ENCODE measurements at regions of chr7 and their contacts with region 1.

Region 1: GRCh38 chr7:13524076-13524475 is 465.4 kb downstream of the ETV1 start:
- DNase-seq: peak; percentile 41
- H3K4me3 Mint-ChIP-seq: no peak overlapping the region
- H3K27ac Mint-ChIP-seq: no peak overlapping the region
- H3K4me1 Mint-ChIP-seq: peaks cover 7% of the 10 kb centered on the region
- H3K27me3 Mint-ChIP-seq: peaks cover 50% of the 10 kb centered on the region
- CTCF ChIP-seq: no peak

Region 2: DNA sequence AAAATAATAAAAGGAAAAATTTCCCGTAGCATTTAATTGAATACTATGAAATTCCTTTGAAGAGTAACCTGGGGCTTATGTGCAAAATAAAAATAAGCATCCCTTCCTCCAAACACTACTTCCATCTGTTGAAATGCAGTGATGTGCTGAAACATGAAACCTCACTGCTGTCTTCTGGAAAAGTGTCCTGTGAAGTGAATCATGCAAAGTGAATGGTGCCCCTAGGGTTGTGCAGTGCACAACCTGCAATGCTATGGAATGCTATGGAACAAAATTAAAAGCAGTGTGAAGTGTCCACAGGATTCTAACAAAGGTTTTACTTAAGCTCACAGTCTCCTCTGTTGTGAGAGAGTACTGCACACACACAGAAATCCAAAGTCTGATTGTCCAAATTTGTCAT is 15.5 kb before region 1 on chr7:
- CTCF ChIA-PET with region 1: interaction called, 11 read pairs
- POLR2A ChIA-PET with region 1: no interaction called
- intact Hi-C with region 1: no loop called
- DNase-seq: peak; percentile 28
- H3K4me3 Mint-ChIP-seq: no peak overlapping the region
- H3K27ac Mint-ChIP-seq: no peak overlapping the region
- H3K4me1 Mint-ChIP-seq: no peaks in the 10 kb centered on the region
- H3K27me3 Mint-ChIP-seq: peaks cover 11% of the 10 kb centered on the region
- CTCF ChIP-seq: no peak

Region 3: GRCh38 chr7:13725591-13725990 is 201.5 kb after region 1 on chr7:
- CTCF ChIA-PET with region 1: interaction called, 6 read pairs
- POLR2A ChIA-PET with region 1: no interaction called
- intact Hi-C with region 1: loop called (anchors 1 kb)
- DNase-seq: no peak
- H3K4me3 Mint-ChIP-seq: no peak overlapping the region
- H3K27ac Mint-ChIP-seq: no peak overlapping the region
- H3K4me1 Mint-ChIP-seq: no peaks in the 10 kb centered on the region
- H3K27me3 Mint-ChIP-seq: no peaks in the 10 kb centered on the region
- CTCF ChIP-seq: no peak

Region 4: DNA sequence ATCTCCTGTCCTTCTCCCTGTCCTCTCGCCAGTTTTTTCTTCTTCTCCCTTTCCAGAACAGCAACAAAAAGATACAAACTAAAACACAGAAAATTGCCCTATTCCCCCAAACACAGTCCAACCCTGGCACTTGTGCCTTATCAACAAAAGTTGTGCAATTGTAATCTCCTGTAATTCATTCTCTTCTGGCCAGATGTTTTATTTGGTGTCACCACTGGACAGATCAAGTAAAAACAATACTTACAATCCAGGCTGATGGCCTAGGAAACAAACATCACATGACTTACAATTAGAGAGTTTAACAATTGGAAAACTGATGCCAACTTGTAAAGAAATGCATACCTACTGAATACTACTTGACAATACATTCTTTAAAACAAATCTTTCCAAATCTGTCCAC is 233.8 kb after region 1 on chr7:
- CTCF ChIA-PET with region 1: no interaction called
- POLR2A ChIA-PET with region 1: no interaction called
- intact Hi-C with region 1: no loop called
- DNase-seq: no peak
- H3K4me3 Mint-ChIP-seq: no peak overlapping the region
- H3K27ac Mint-ChIP-seq: no peak overlapping the region
- H3K4me1 Mint-ChIP-seq: no peaks in the 10 kb centered on the region
- H3K27me3 Mint-ChIP-seq: no peaks in the 10 kb centered on the region
- CTCF ChIP-seq: no peak

Region 5: GRCh38 chr7:13990984-13991790 is 467.1 kb after region 1 on chr7:
- CTCF ChIA-PET with region 1: interaction called, 3 read pairs
- POLR2A ChIA-PET with region 1: no interaction called
- intact Hi-C with region 1: loop called (anchors 2 kb)
- DNase-seq: peak; percentile 96
- H3K4me3 Mint-ChIP-seq: no peak overlapping the region
- H3K27ac Mint-ChIP-seq: no peak overlapping the region
- H3K4me1 Mint-ChIP-seq: no peaks in the 10 kb centered on the region
- H3K27me3 Mint-ChIP-seq: no peaks in the 10 kb centered on the region
- CTCF ChIP-seq: no peak

Region 6: GRCh38 chr7:14691597-14692203 is 1167.6 kb after region 1 on chr7:
- CTCF ChIA-PET with region 1: interaction called, 13 read pairs
- POLR2A ChIA-PET with region 1: no interaction called
- intact Hi-C with region 1: loop called (anchors 2 kb)
- DNase-seq: peak; percentile 42
- H3K4me3 Mint-ChIP-seq: no peak overlapping the region
- H3K27ac Mint-ChIP-seq: no peak overlapping the region
- H3K4me1 Mint-ChIP-seq: no peaks in the 10 kb centered on the region
- H3K27me3 Mint-ChIP-seq: peaks cover 33% of the 10 kb centered on the region
- CTCF ChIP-seq: peak; percentile 88

Measured in MCF 10A (cell line).